Natural killer cell (primary cell): ENCODE measurements at regions of chr1 and their contacts with region 1.

Region 1: GRCh38 chr1:9867408-9868243 is 42.4 kb downstream of the CTNNBIP1 start:
- DNase-seq: peak; percentile 88 to 94
- ATAC-seq: peak; percentile 91 to 100 (median 98)
- H3K4me3 ChIP-seq: no peak overlapping the region
- H3K4me3 Mint-ChIP-seq: no peak overlapping the region
- H3K27ac ChIP-seq: no peak overlapping the region
- H3K27ac Mint-ChIP-seq: no peak overlapping the region
- H3K4me1 ChIP-seq: peaks cover 6% of the 10 kb centered on the region
- H3K4me1 Mint-ChIP-seq: peaks cover 4 to 8% of the 10 kb centered on the region in 2 donors
- H3K27me3 ChIP-seq: no peaks in the 10 kb centered on the region
- H3K27me3 Mint-ChIP-seq: no peaks in the 10 kb centered on the region
- CTCF ChIP-seq: peak; percentile 91

Region 2: DNA sequence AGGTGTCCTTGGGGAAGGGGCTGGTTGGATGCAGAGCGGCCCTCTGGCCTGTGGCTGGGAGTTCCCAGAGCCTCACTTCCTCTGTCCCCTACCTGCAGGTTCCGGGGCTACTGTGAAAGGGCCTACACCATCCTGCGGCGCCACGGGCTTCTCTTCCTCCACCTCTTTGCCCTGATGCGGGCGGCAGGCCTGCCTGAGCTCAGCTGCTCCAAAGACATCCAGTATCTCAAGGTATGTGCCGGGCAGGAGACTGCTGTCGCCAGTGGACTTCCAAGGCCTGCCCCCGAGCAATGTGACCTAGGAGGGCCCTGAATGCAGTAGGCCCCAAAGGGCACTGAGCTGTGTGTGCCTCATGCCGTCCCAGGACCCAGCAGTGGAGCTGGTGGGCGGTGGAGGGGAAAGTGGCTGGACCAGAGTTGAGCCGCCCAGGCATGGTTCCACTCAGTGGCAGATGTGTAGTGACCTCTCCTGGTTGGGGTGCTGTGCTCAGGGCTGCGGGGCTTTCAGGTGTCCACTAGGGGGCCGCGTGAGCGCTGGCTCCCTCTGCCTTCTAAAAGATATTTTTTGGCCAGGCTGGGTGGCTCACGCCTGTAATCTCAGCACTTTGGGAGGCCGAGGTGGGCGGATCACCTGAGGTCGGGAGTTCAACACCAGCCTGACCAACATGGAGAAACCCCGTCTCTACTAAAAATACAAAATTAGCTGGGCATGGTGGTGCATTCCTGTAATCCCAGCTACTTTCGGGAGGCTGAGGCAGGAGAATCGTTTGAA is 142.7 kb before region 1 on chr1:
- intact Hi-C with region 1: loop called (anchors 1 kb)
- DNase-seq: peak; percentile 67 to 86
- ATAC-seq: peak; percentile 79 to 86 (median 82)
- H3K4me3 ChIP-seq: no peak overlapping the region
- H3K4me3 Mint-ChIP-seq: no peak overlapping the region
- H3K27ac ChIP-seq: no peak overlapping the region
- H3K27ac Mint-ChIP-seq: peak overlapping the region; percentile 50 to 76
- H3K4me1 ChIP-seq: peaks cover 57% of the 10 kb centered on the region
- H3K4me1 Mint-ChIP-seq: peaks cover 24 to 32% of the 10 kb centered on the region in 2 donors
- H3K27me3 ChIP-seq: no peaks in the 10 kb centered on the region
- H3K27me3 Mint-ChIP-seq: no peaks in the 10 kb centered on the region
- CTCF ChIP-seq: peak; percentile 89

Region 3: DNA sequence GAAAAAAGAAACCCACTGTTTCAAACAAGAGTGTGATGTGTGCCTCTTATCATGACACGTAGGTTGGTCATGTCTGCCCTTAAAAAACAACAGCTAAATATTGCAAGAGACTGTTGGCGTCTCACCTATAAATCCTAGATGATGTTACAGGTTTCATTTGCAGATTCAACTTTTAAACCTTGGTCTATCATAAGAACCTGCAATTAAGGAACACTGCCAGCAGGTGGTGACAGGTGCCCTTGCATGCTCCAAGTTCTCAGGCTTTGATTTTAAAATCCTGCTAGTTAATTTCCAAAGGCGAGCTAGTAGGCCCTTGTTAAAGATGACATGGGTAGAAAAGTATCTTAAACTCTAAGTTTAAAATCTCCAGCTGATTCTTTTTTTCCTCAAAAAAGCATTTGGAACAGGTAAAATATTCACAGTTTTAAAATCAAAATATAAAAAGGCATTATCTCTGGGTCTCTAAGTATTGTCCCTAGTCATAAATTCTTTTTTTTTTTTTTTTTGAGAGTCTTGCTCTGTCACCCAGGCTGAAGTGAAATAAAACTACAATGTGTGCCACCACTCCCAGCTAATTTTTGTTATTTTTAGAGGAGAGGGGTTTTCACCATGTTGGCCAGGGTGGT is 83.0 kb before region 1 on chr1:
- intact Hi-C with region 1: loop called (anchors 1 kb)
- DNase-seq: peak in 1 of 2 donors; percentile 88
- ATAC-seq: peak; percentile 53 to 71 (median 65)
- H3K4me3 ChIP-seq: no peak overlapping the region
- H3K4me3 Mint-ChIP-seq: no peak overlapping the region
- H3K27ac ChIP-seq: no peak overlapping the region
- H3K27ac Mint-ChIP-seq: no peak overlapping the region
- H3K4me1 ChIP-seq: peaks cover 18% of the 10 kb centered on the region
- H3K4me1 Mint-ChIP-seq: peaks cover 12 to 23% of the 10 kb centered on the region in 2 donors
- H3K27me3 ChIP-seq: no peaks in the 10 kb centered on the region
- H3K27me3 Mint-ChIP-seq: no peaks in the 10 kb centered on the region
- CTCF ChIP-seq: peak; percentile 76